Transverse colon (tissue), 4 donors: ENCODE measurements at regions of chr15 and their contacts with region 1.

Region 1: GRCh38 chr15:56869573-56869972 is 48.9 kb upstream of the TCF12 start:
- DNase-seq: peak; percentile 57
- H3K4me3 ChIP-seq: no peak overlapping the region
- H3K27ac ChIP-seq: no peak overlapping the region
- H3K4me1 ChIP-seq: peaks cover 0 to 6% (median 0%) of the 10 kb centered on the region in 4 donors
- H3K27me3 ChIP-seq: no peaks in the 10 kb centered on the region
- CTCF ChIP-seq: peak; percentile 51 to 60 (median 55)
- EP300 ChIP-seq: no peak
- POLR2A ChIP-seq: no peak

Region 2: DNA sequence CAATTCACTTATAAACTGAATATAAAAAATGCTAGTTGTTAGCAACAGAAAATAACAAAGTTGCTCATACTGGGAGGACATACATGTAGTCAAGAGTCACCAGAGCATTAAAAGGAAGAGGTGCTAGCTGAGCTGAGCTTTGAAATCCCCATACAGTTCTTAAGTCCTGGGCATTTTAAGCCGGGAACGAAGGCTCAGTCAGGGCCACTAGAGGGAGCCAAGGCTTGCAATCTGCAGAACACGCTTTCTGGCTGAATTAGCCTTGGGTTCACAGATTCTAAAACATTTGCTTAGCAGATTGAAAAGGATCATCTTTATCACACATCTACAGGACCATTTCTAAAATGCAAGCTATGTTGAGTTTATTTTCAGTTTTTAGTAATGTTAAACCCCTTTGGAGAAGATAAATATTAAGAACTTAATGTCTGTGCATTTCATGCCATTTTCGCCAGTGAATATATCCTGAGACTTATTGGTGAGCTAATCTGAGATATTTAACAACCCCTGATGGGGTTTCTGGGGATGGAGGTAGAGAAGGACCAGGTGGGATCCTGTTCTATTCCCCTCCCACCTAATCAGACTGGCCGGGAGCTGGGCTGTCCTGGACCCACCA is 378.4 kb before region 1 on chr15:
- in situ Hi-C with region 1: loop called in 3 of 4 experiments (anchors 10 to 25 kb)
- intact Hi-C with region 1: no loop called
- DNase-seq: peak; percentile 74
- H3K4me3 ChIP-seq: no peak overlapping the region
- H3K27ac ChIP-seq: no peak overlapping the region
- H3K4me1 ChIP-seq: peaks cover 0 to 23% (median 0%) of the 10 kb centered on the region in 4 donors
- H3K27me3 ChIP-seq: no peaks in the 10 kb centered on the region
- CTCF ChIP-seq: peak; percentile 66 to 81 (median 73)
- EP300 ChIP-seq: no peak
- POLR2A ChIP-seq: no peak

Region 3: DNA sequence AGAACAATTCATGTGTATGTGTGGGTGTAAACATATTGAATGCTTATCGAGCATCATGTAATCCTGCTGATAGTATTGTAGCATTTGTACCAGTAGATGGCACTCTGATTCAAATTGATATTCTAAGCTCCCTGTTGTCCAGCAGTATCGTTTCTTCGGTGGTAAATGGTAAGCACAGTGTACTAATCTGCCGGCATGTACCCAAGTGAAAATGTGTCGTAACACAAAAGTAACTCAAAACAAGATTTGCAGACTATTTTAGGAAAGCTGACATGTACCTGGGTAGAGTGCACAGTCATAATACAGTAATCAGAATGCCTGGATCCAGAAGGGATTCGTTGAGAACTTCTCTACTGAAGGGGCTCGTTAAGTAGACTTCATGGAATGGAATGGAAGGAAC is 372.9 kb before region 1 on chr15:
- in situ Hi-C with region 1: loop called (anchors 10 to 25 kb)
- intact Hi-C with region 1: no loop called
- DNase-seq: no peak
- H3K4me3 ChIP-seq: no peak overlapping the region
- H3K27ac ChIP-seq: no peak overlapping the region
- H3K4me1 ChIP-seq: peaks cover 0 to 20% (median 0%) of the 10 kb centered on the region in 4 donors
- H3K27me3 ChIP-seq: no peaks in the 10 kb centered on the region
- CTCF ChIP-seq: peak; percentile 66 to 73 (median 67)
- EP300 ChIP-seq: no peak
- POLR2A ChIP-seq: no peak

Region 4: GRCh38 chr15:56821721-56822425 is 47.7 kb before region 1 on chr15:
- in situ Hi-C with region 1: no loop called
- intact Hi-C with region 1: loop called (anchors 10 kb)
- DNase-seq: peak; percentile 70
- H3K4me3 ChIP-seq: no peak overlapping the region
- H3K27ac ChIP-seq: no peak overlapping the region
- H3K4me1 ChIP-seq: peaks cover 0 to 7% (median 0%) of the 10 kb centered on the region in 4 donors
- H3K27me3 ChIP-seq: no peaks in the 10 kb centered on the region
- CTCF ChIP-seq: peak; percentile 63 to 73 (median 70)
- EP300 ChIP-seq: no peak
- POLR2A ChIP-seq: no peak